Right ventricle myocardium inferior (tissue), 1 donor: ENCODE measurements at regions of chr16 and their contacts with region 1.

Region 1: DNA sequence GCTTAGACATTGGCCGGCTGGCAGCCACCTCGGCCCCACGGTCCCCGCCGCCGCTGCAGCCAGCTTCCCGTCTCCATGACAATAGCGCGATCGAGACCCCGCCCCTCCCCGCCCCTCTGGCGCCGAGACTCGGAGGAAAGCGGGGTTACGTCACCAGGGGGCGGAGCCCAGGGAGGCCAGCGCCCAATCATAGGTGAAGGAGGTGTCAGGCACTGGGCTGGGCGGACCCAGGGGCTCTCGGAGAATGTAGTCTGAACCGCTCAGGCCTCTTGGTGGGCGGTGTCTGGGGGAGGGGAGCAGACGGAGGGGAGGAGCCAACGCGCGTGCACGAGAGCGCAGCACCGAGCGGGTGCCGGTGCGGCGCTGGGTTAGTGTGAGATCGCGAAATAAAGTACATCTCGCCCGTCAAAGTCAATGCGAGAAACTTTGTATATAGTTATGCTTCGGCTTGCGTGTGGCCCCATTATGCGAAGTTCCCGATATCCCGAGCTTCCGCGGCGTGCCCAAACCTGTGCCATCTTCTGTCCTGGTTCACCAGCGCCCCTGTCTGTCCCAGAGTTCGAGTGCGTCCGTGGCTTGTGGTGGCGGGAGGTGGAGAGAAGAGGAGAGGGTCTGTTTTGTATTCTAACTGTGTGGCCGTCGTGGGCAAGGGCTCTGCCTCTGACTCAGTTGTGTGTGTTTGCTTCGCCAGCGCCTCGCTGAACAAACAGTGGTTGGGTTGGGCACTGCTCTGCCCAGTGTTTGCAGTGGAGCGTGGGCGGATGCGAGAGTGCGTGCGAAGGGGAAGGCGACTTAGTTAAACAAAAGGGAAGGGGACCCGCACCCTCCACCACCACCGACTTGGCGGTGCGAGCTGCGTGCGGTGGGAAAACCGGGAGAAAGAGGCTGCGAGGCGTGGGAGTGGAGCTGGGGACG is 1.3 kb upstream of the IRX5 start:
- DNase-seq: peak; percentile 99
- ATAC-seq: peak; percentile 95

Region 2: DNA sequence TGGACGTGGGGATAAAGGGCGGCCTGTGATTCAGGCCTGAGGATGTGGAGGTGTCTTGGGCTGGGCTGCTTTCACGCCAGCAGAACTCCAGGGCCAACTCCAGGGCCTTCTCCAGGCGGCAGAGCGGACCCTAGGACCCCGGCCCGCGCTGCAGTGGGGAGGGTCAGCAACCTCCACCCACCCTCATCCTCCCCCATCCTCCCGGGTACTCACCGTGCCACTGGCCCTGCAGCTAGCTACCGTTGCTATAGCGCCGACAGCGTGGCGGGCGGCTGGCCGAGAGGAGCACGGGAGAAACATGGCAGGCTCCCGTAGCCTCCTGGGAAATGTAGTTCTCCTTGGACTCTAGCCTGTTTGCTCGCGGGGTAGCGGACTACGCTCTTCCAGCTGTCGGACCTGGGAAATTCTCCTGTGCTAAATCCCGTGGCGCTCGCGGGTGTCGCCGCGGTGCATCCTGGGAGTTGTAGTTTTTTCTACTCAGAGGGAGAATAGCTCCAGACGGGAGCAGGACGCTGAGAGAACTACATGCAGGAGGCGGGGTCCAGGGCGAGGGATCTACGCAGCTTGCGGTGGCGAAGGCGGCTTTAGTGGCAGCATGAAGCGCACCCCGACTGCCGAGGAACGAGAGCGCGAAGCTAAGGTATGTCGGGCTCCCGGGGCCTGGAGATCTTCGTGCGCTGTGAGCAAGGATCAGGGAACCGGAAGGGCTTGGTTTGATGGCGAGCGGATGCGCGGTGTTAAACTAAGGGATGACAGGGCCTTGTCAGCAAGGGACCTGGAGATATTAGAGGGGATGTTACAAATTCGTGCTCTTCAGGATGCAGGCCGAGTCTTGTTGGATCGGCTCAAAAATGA is 1225.5 kb before region 1 on chr16 and contains the starts of genes FTO and RPGRIP1L:
- intact Hi-C with region 1: loop called (anchors 10 kb)
- DNase-seq: peak; percentile 98
- ATAC-seq: peak; percentile 99
- total RNA-seq, gene FTO: 69.5 TPM
- total RNA-seq, gene RPGRIP1L: 2.1 TPM

Region 3: DNA sequence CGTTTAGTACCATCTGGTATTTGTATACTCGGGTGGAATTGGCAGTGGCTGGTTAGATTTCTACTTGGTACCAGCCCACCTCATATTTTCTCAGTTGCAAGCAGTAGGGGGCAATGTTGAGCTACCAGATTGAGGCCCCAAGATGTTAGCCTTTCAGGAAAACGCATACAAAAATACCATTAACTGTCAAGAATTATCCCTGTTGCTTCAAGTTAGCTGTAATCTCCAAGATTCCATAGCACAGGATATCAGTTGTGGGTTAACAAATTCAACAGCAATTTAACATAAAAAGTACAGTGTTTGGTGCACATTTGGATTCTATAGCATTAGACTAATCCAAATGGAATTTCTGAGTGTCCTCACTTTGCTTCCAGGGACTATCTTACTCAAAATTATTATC is 1037.2 kb before region 1 on chr16:
- intact Hi-C with region 1: loop called (anchors 5 kb)
- DNase-seq: no peak
- ATAC-seq: peak; percentile 60

Region 4: GRCh38 chr16:54193665-54194333 is 735.5 kb before region 1 on chr16:
- intact Hi-C with region 1: loop called (anchors 10 kb)
- DNase-seq: peak; percentile 88
- ATAC-seq: peak; percentile 89

Region 5: DNA sequence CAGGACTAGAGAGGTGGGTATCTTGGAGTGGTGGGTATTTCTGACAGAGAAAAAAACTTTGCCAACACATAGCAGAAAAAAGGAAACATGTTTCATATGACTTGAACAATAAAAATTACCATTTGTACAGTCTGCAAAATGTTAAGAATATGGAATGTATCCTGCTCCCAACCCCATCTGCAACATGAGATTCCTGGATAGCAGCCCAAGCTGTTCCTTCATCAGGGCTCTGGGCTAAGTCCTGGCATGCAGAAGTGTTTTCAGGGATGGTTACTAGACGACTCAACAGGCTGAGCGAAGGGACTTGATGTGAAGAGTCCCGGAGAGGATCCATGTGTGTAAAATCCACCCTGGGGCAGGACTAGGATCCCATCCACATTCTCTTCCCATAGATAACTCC is 521.8 kb before region 1 on chr16:
- intact Hi-C with region 1: loop called (anchors 10 kb)
- DNase-seq: no peak
- ATAC-seq: no peak

Region 6: GRCh38 chr16:54503011-54503855 is 426.1 kb before region 1 on chr16:
- intact Hi-C with region 1: loop called (anchors 5 kb)
- DNase-seq: peak; percentile 75
- ATAC-seq: peak; percentile 97

Region 7: GRCh38 chr16:54862529-54862928 is 66.8 kb before region 1 on chr16:
- intact Hi-C with region 1: loop called (anchors 5 kb)
- DNase-seq: no peak
- ATAC-seq: peak; percentile 83